B cell (primary cell): ENCODE measurements at regions of chr6 and their contacts with region 1.

Region 1: GRCh38 chr6:25070547-25071366 is 135.0 kb upstream of the RIPOR2 start:
- DNase-seq: peak; percentile 93
- ATAC-seq: peak; percentile 97
- H3K4me3 ChIP-seq: peak overlapping the region in 4 of 5 experiments; percentile 31 to 72 (median 48)
- H3K4me3 Mint-ChIP-seq: peak overlapping the region; percentile 86
- H3K27ac ChIP-seq: peak overlapping the region; percentile 74 to 80
- H3K27ac Mint-ChIP-seq: peak overlapping the region; percentile 97
- H3K4me1 ChIP-seq: peaks cover 0 to 4% of the 10 kb centered on the region in 2 donors
- H3K4me1 Mint-ChIP-seq: peaks cover 9% of the 10 kb centered on the region
- H3K27me3 ChIP-seq: no peaks in the 10 kb centered on the region
- H3K27me3 Mint-ChIP-seq: no peaks in the 10 kb centered on the region
- CTCF ChIP-seq: peak; percentile 95

Region 2: GRCh38 chr6:25035527-25036435 is 35.0 kb before region 1 on chr6:
- CTCF ChIA-PET with region 1: interaction called, 50 read pairs
- POLR2A ChIA-PET with region 1: interaction called, 3 read pairs
- intact Hi-C with region 1: no loop called
- DNase-seq: peak; percentile 50
- ATAC-seq: peak; percentile 57
- H3K4me3 ChIP-seq: peak overlapping the region in 4 of 5 experiments; percentile 28 to 65 (median 50)
- H3K4me3 Mint-ChIP-seq: peak overlapping the region; percentile 89
- H3K27ac ChIP-seq: peak overlapping the region; percentile 76 to 78
- H3K27ac Mint-ChIP-seq: peak overlapping the region; percentile 91
- H3K4me1 ChIP-seq: peaks cover 53 to 63% of the 10 kb centered on the region in 2 donors
- H3K4me1 Mint-ChIP-seq: peaks cover 66% of the 10 kb centered on the region
- H3K27me3 ChIP-seq: no peaks in the 10 kb centered on the region
- H3K27me3 Mint-ChIP-seq: no peaks in the 10 kb centered on the region
- CTCF ChIP-seq: no peak

Region 3: DNA sequence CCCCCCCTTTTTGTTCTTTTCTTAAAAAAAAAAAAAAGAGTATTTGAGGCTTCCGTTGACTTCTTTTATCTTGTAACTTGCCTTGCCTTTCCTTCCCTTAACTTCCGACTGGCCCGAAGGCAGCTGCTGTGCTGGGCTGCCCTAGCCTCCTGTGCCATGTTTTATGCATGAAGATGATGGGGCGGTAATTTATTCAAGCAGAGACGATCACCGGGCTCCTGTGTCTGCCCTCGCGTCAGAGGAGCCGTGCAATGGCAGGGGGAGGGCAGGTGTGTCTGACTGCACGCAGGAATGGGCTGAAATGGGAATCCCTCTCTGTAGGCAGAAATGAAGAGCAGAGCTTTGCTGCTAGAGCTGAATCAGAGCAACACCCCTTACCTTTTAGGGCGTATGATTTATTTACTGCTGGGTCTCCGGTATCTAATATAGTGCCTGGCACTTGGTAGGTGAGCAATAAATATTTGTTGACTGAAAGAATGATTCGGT is 28.7 kb before region 1 on chr6:
- CTCF ChIA-PET with region 1: interaction called, 50 read pairs
- POLR2A ChIA-PET with region 1: no interaction called
- intact Hi-C with region 1: loop called (anchors 1 kb)
- DNase-seq: peak; percentile 75
- ATAC-seq: peak; percentile 69
- H3K4me3 ChIP-seq: peak overlapping the region in 4 of 5 experiments; percentile 41 to 73 (median 66)
- H3K4me3 Mint-ChIP-seq: peak overlapping the region; percentile 91
- H3K27ac ChIP-seq: peak overlapping the region; percentile 50 to 90
- H3K27ac Mint-ChIP-seq: peak overlapping the region; percentile 96
- H3K4me1 ChIP-seq: peaks cover 58 to 63% of the 10 kb centered on the region in 2 donors
- H3K4me1 Mint-ChIP-seq: peaks cover 71% of the 10 kb centered on the region
- H3K27me3 ChIP-seq: no peaks in the 10 kb centered on the region
- H3K27me3 Mint-ChIP-seq: no peaks in the 10 kb centered on the region
- CTCF ChIP-seq: no peak

Region 4: DNA sequence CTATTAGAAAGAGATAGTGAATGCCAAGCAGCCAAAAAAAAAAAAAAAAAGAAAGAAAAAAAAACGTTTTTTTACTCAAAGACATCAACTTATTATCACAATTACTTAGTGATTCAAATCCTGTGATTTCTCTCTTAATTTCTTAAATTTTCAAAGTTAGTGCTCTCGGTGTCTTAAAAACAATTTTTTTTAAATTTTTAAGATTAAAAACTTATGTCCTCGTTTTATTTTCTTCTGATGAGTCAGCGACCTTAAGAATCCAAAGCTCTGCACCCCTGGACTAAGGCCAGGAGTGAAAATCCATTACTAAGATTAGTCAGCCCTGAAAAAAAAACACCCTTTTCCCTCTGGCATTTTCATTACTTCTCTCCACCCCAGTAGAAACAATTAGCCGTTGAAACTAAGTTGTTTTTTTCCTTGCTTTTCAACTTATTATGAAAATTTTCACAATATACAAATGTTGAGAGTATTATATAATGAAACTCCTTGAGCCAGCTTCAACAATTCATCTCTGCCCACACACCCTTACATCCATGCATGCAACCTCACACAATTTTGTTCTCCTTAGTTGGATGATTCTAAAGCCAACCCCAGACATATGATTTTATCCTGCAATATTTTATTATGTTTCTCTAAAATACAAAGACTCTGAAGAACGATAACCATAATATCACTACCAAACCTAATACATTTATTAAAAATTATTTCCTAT is 122.9 kb after region 1 on chr6:
- CTCF ChIA-PET with region 1: no interaction called
- POLR2A ChIA-PET with region 1: no interaction called
- intact Hi-C with region 1: no loop called
- DNase-seq: no peak
- ATAC-seq: no peak
- H3K4me3 ChIP-seq: no peak overlapping the region
- H3K4me3 Mint-ChIP-seq: no peak overlapping the region
- H3K27ac ChIP-seq: no peak overlapping the region
- H3K27ac Mint-ChIP-seq: no peak overlapping the region
- H3K4me1 ChIP-seq: no peaks in the 10 kb centered on the region
- H3K4me1 Mint-ChIP-seq: no peaks in the 10 kb centered on the region
- H3K27me3 ChIP-seq: no peaks in the 10 kb centered on the region
- H3K27me3 Mint-ChIP-seq: peaks cover 30% of the 10 kb centered on the region
- CTCF ChIP-seq: no peak

Region 5: DNA sequence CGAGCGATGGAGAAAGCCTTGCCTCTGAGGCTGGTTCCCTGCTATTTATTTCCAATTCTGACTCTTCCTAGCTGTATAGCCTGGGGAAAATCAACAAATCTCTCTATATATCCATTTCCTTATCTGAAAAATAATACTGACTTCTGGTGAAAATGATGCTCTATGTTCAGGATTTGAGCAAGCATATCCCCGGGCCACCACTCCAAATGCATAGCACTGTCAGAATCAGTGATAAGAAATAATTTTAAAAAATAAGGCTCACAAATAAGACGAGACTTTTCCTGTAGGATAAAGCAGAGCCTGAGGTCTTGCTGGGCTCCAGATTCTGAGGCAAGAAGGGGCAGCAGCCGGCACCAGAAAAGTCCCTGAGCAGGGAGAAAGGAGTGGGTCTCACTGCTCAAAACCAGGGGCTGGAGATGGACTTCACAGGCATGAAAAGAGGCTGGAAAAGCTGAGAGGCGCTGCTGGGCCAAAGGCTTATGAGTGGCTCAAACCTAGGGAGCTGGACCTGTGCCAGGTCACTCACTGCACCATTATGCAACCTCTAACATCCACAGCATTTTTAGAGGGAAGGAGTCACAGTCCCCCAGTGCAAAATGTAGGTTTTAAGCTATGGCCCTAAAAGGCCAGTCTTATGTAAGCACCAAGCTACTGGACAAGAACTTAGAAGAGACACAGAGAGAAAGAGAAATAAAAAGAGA is 635.7 kb after region 1 on chr6:
- CTCF ChIA-PET with region 1: no interaction called
- POLR2A ChIA-PET with region 1: no interaction called
- intact Hi-C with region 1: no loop called
- DNase-seq: no peak
- ATAC-seq: no peak
- H3K4me3 ChIP-seq: no peak overlapping the region
- H3K4me3 Mint-ChIP-seq: no peak overlapping the region
- H3K27ac ChIP-seq: no peak overlapping the region
- H3K27ac Mint-ChIP-seq: no peak overlapping the region
- H3K4me1 ChIP-seq: no peaks in the 10 kb centered on the region
- H3K4me1 Mint-ChIP-seq: no peaks in the 10 kb centered on the region
- H3K27me3 ChIP-seq: peaks cover 0 to 7% (median 0%) of the 10 kb centered on the region in 4 experiments
- H3K27me3 Mint-ChIP-seq: peaks cover 30% of the 10 kb centered on the region
- CTCF ChIP-seq: no peak